CD4-positive, alpha-beta memory T cell (primary cell): ENCODE measurements at regions of chr3 and their contacts with region 1.

Region 1: DNA sequence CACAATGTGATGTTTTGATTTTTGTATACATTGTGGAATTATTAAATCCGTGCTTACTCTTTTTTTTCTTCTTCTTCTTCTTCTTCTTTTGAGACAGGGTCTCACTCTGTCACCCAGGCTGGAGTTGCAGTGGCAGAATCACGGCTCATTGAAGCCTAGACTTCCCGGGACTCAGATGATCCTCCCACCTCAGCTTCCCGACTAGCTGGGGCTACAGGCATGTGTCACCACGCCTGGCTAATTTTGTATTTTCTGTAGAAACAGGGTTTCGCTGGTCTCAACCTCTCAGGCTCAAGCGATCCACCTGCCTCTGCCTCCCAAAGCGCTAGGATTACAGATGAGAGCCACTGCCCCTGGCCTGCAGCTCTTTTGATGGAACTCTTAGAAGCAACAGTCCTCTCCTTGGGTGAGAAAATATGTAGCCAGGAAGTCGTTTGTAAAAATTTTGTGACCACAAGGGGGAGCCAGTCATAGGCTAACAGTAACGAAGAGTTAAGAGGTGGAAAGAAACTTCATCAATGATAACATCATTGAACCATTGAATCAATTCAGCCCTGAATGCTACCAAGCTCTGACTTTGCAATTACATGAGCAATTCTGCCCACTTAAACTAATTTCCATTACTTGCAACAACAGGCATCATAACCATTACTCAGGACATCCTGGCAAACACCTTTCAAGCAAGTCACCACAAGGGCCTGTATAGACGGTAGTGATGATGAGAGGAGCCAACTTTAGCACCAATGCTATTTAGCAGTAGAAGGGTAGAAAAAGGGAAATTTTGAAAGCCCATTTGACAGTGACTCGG is 16.7 kb upstream of the CMTM7 start:
- DNase-seq: peak; percentile 74 to 78 (median 78)
- H3K4me3 ChIP-seq: no peak overlapping the region
- H3K4me3 Mint-ChIP-seq: peak overlapping the region in 1 of 8 donors; percentile 21
- H3K27ac ChIP-seq: no peak overlapping the region
- H3K27ac Mint-ChIP-seq: peak overlapping the region in 5 of 7 donors; percentile 18 to 70 (median 33)
- H3K4me1 ChIP-seq: peaks cover 21% of the 10 kb centered on the region
- H3K4me1 Mint-ChIP-seq: peaks cover 18 to 28% (median 24%) of the 10 kb centered on the region in 4 donors
- H3K27me3 ChIP-seq: no peaks in the 10 kb centered on the region
- H3K27me3 Mint-ChIP-seq: no peaks in the 10 kb centered on the region

Region 2: DNA sequence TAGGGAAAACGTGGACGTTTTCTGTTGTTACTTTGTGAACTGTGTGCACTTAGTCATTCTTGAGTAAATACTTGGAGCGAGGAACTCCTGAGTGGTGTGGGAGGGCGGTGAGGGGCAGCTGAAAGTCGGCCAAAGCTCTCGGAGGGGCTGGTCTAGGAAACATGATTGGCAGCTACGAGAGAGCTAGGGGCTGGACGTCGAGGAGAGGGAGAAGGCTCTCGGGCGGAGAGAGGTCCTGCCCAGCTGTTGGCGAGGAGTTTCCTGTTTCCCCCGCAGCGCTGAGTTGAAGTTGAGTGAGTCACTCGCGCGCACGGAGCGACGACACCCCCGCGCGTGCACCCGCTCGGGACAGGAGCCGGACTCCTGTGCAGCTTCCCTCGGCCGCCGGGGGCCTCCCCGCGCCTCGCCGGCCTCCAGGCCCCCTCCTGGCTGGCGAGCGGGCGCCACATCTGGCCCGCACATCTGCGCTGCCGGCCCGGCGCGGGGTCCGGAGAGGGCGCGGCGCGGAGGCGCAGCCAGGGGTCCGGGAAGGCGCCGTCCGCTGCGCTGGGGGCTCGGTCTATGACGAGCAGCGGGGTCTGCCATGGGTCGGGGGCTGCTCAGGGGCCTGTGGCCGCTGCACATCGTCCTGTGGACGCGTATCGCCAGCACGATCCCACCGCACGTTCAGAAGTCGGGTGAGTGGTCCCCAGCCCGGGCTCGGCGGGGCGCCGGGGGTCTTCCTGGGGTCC is 1768.5 kb before region 1 on chr3 and contains the start of gene TGFBR2:
- CTCF ChIA-PET with region 1: no interaction called
- POLR2A ChIA-PET with region 1: no interaction called
- intact Hi-C with region 1: no loop called
- DNase-seq: peak; percentile 67 to 90 (median 69)
- H3K4me3 ChIP-seq: peak within 1 kb of the TSS; percentile 82 to 89
- H3K4me3 Mint-ChIP-seq: peak within 1 kb of the TSS; percentile 97 to 99 (median 99)
- H3K27ac ChIP-seq: peak within 1 kb of the TSS; percentile 85
- H3K27ac Mint-ChIP-seq: peak within 1 kb of the TSS; percentile 92 to 99 (median 98)
- H3K4me1 ChIP-seq: peaks cover 57% of the 10 kb centered on the region
- H3K4me1 Mint-ChIP-seq: peaks cover 43 to 67% (median 48%) of the 10 kb centered on the region in 4 donors
- H3K27me3 ChIP-seq: no peaks in the 10 kb centered on the region
- H3K27me3 Mint-ChIP-seq: no peaks in the 10 kb centered on the region
- total RNA-seq, gene TGFBR2: 110 TPM

Region 3: DNA sequence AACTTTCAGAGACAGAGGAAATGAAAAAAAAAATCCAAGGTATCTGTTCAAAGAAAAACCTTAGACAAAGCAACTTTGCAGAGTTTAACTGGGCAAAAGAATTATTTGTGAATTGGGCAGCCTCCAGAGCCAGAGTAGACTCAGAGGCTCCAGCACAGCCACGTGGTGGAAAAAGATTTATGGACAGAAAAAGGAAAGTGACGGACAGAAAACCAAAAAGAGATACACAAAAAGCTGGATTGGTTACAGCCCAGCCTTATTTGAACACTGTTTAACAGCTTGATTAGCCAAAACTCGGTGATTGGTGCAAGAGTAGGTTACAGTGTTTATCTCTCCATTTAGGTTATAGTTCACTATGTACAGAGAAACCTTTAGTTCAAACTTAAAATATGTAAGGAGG is 292.3 kb before region 1 on chr3:
- CTCF ChIA-PET with region 1: no interaction called
- POLR2A ChIA-PET with region 1: no interaction called
- intact Hi-C with region 1: no loop called
- DNase-seq: no peak
- H3K4me3 ChIP-seq: no peak overlapping the region
- H3K4me3 Mint-ChIP-seq: no peak overlapping the region
- H3K27ac ChIP-seq: no peak overlapping the region
- H3K27ac Mint-ChIP-seq: no peak overlapping the region
- H3K4me1 ChIP-seq: no peaks in the 10 kb centered on the region
- H3K4me1 Mint-ChIP-seq: no peaks in the 10 kb centered on the region
- H3K27me3 ChIP-seq: no peaks in the 10 kb centered on the region
- H3K27me3 Mint-ChIP-seq: peaks cover 3 to 11% of the 10 kb centered on the region in 2 donors

Region 4: DNA sequence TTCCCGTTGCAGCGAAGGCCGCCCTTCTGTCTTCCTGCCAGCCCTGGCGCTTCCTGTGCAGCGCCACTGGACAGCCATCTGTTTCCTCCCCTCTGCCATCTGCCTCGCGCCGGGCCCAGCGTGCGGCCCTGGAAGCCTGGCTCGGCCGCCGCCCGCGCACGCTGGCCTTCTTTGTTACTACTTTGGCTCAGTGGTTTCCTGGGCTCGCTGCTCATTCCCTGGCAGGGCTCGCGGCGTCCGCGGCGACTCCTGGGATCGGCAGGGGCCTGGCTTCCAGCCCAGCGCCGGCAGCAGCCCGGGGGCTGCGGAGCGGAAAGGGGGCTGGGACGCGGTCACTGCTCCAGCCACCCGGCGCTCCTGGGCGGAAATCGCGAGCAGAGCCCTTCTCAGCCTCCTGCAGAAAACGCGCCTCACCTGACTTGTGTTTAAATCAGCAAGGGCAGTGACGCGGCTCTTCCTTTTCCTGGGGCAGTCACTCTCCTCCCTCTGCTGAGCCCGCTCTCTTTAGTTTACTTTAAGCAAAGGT is 26.6 kb after region 1 on chr3:
- CTCF ChIA-PET with region 1: interaction called, 156 read pairs
- POLR2A ChIA-PET with region 1: interaction called, 6 read pairs
- intact Hi-C with region 1: loop called (anchors 1 kb)
- DNase-seq: peak; percentile 60 to 75 (median 67)
- H3K4me3 ChIP-seq: peak overlapping the region; percentile 61 to 68
- H3K4me3 Mint-ChIP-seq: peak overlapping the region; percentile 87 to 95 (median 94)
- H3K27ac ChIP-seq: peak overlapping the region; percentile 84
- H3K27ac Mint-ChIP-seq: peak overlapping the region; percentile 95 to 100 (median 99)
- H3K4me1 ChIP-seq: peaks cover 72% of the 10 kb centered on the region
- H3K4me1 Mint-ChIP-seq: peaks cover 53 to 84% (median 69%) of the 10 kb centered on the region in 4 donors
- H3K27me3 ChIP-seq: no peaks in the 10 kb centered on the region
- H3K27me3 Mint-ChIP-seq: no peaks in the 10 kb centered on the region

Region 5: GRCh38 chr3:32420126-32421038 is 45.4 kb after region 1 on chr3:
- CTCF ChIA-PET with region 1: interaction called, 11 read pairs
- POLR2A ChIA-PET with region 1: interaction called, 6 read pairs
- intact Hi-C with region 1: no loop called
- DNase-seq: no peak
- H3K4me3 ChIP-seq: no peak overlapping the region
- H3K4me3 Mint-ChIP-seq: peak overlapping the region in 7 of 8 donors; percentile 31 to 76 (median 70)
- H3K27ac ChIP-seq: peak overlapping the region; percentile 18
- H3K27ac Mint-ChIP-seq: peak overlapping the region; percentile 3 to 96 (median 92)
- H3K4me1 ChIP-seq: peaks cover 94% of the 10 kb centered on the region
- H3K4me1 Mint-ChIP-seq: peaks cover 66 to 100% (median 89%) of the 10 kb centered on the region in 4 donors
- H3K27me3 ChIP-seq: no peaks in the 10 kb centered on the region
- H3K27me3 Mint-ChIP-seq: no peaks in the 10 kb centered on the region